Heart right ventricle (tissue), 16 donors: ENCODE measurements at regions of chr4 and their contacts with region 1.

Region 1: GRCh38 chr4:10582059-10582686 is 102.4 kb downstream of the CLNK start:
- DNase-seq: peak in 1 of 2 donors; percentile 35
- ATAC-seq: peak in 3 of 8 donors; percentile 45 to 76 (median 56)
- H3K4me3 ChIP-seq: no peak overlapping the region
- H3K27ac ChIP-seq: no peak overlapping the region
- H3K4me1 ChIP-seq: peaks cover 0 to 12% (median 0%) of the 10 kb centered on the region in 9 donors
- H3K27me3 ChIP-seq: peaks cover 0 to 10% (median 0%) of the 10 kb centered on the region in 7 donors
- CTCF ChIP-seq: peak; percentile 27 to 84 (median 78)

Region 2: DNA sequence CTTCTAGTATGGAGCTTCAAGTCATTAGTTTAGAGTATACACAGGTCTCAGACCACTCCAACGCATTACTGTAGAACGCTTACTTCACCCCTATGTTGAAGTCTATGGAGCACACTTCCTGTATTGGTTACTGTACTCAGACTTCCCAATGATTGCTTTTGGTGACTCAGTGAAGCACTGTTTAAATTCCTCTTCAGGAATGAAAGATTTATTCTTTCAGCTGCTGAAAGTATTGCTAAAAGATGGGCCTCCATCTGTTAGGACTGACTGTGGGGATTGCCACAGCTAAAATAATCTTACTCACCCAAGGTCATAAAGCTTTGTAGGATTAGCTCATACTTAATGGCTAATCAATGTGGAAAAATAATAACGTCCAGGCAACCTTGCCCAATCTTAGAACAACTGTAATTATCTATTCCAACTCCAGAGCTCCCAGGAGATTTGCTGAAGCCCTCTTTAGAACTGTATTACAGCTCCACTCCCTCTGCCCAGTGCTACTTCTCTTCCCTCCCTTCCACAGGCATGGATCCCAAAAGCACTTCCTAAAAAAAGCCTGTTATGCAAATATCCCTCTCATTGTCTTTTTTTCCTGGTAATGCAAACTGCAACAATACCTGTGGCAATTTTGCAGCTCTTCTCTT is 1128.4 kb after region 1 on chr4:
- intact Hi-C with region 1: loop called in 1 of 10 experiments (anchors 10 kb)
- DNase-seq: no peak
- ATAC-seq: no peak
- H3K4me3 ChIP-seq: no peak overlapping the region
- H3K27ac ChIP-seq: no peak overlapping the region
- H3K4me1 ChIP-seq: no peaks in the 10 kb centered on the region
- H3K27me3 ChIP-seq: no peaks in the 10 kb centered on the region
- CTCF ChIP-seq: no peak